Activated CD4-positive, alpha-beta T cell treated with anti-CD3 and anti-CD28 coated beads, Interleukin-2, amount 10 ng/mL, durations not matched to agents 24 days and 14 days (primary cell): ENCODE measurements at regions of chr13 and their contacts with region 1.

Region 1: DNA sequence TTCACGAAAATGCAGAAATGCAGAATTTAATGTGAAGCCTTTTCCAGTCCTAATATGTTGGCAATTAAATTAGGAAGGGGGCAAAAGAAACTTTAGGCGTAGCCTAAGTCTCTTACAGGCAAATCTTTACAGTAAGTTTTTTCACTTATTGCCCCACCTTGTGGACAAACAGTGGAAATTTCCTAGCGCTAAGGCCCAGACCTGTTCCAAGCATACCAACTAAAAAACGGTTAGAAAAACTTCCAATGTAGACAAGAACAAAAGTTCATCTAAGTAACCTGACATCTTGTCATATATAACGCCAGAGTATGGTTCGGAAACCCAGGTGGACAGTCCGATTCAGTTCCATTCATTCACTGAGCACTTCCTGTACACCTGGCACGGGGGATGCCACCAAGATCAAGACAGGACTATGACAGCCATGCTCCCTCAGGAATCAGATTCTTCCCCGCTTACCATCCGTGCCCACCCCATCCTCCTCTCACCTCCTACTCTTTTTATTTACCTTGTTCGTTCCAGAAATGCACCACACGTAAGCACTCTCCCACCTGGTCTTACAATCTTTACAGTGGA is 4.9 kb downstream of the ZAR1L start:
- DNase-seq: peak; percentile 81
- H3K4me3 Mint-ChIP-seq: no peak overlapping the region
- H3K27ac Mint-ChIP-seq: no peak overlapping the region
- H3K4me1 Mint-ChIP-seq: peaks cover 21% of the 10 kb centered on the region
- H3K27me3 Mint-ChIP-seq: peaks cover 3% of the 10 kb centered on the region

Region 2: DNA sequence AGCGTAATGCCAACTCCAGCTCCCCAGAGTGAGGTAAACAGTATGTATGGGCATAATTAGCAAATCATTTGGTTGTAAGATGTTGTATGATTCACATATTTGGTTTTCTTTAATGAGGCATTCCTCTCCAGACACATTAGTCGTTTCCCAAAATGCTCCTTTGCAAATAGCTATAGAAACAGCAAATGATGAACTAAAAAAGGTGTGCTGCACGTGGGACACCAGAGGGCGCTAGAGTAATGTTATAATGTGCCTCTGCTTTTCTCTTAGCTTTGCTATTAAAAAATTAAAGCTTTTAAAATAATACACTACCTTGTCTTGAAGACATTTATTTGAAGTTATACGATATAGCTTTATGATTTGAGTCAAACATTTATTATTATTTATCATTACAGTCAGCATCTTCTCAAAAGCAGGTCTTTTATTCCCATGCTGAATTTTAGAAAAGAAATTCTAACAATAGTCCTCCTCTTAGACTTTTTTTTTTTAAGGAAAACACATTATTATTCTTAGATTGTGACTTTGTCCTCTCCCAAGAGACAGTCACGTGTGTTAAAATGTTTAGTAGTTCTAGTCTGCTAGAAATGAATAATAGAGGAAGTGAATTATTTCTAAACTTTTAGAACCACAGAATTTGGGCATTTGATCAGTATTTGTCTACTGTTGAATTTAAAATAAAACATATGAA is 400.2 kb before region 1 on chr13:
- intact Hi-C with region 1: loop called (anchors 1 kb)
- DNase-seq: peak; percentile 86
- H3K4me3 Mint-ChIP-seq: no peak overlapping the region
- H3K27ac Mint-ChIP-seq: no peak overlapping the region
- H3K4me1 Mint-ChIP-seq: peaks cover 14% of the 10 kb centered on the region
- H3K27me3 Mint-ChIP-seq: peaks cover 31% of the 10 kb centered on the region

Region 3: GRCh38 chr13:32031025-32031814 is 279.0 kb before region 1 on chr13 and contains the start of gene FRY:
- intact Hi-C with region 1: loop called (anchors 5 kb)
- DNase-seq: peak; percentile 87
- H3K4me3 Mint-ChIP-seq: peak within 1 kb of the TSS; percentile 83
- H3K27ac Mint-ChIP-seq: peak within 1 kb of the TSS; percentile 61
- H3K4me1 Mint-ChIP-seq: peaks cover 37% of the 10 kb centered on the region
- H3K27me3 Mint-ChIP-seq: peaks cover 7% of the 10 kb centered on the region
- total RNA-seq, gene FRY: 1.8 and 2.8 TPM in 2 replicates

Region 4: GRCh38 chr13:32246468-32246867 is 63.8 kb before region 1 on chr13:
- intact Hi-C with region 1: loop called (anchors 1 kb)
- DNase-seq: peak; percentile 82
- H3K4me3 Mint-ChIP-seq: no peak overlapping the region
- H3K27ac Mint-ChIP-seq: no peak overlapping the region
- H3K4me1 Mint-ChIP-seq: peaks cover 3% of the 10 kb centered on the region
- H3K27me3 Mint-ChIP-seq: no peaks in the 10 kb centered on the region

Region 5: GRCh38 chr13:32267836-32268439 is 42.3 kb before region 1 on chr13:
- intact Hi-C with region 1: loop called (anchors 1 kb)
- DNase-seq: peak; percentile 80
- H3K4me3 Mint-ChIP-seq: no peak overlapping the region
- H3K27ac Mint-ChIP-seq: no peak overlapping the region
- H3K4me1 Mint-ChIP-seq: peaks cover 6% of the 10 kb centered on the region
- H3K27me3 Mint-ChIP-seq: no peaks in the 10 kb centered on the region

Region 6: GRCh38 chr13:32323912-32324311 is 13.7 kb after region 1 on chr13:
- intact Hi-C with region 1: no loop called
- DNase-seq: no peak
- H3K4me3 Mint-ChIP-seq: no peak overlapping the region
- H3K27ac Mint-ChIP-seq: no peak overlapping the region
- H3K4me1 Mint-ChIP-seq: peaks cover 27% of the 10 kb centered on the region
- H3K27me3 Mint-ChIP-seq: no peaks in the 10 kb centered on the region